ENCODE measurements at regions of chr6 and their contacts with region 1.

Region 1: GRCh38 chr6:52263709-52264540 is 19.6 kb upstream of the IL17F start:
- DNase-seq: peak; percentile 70

Region 2: DNA sequence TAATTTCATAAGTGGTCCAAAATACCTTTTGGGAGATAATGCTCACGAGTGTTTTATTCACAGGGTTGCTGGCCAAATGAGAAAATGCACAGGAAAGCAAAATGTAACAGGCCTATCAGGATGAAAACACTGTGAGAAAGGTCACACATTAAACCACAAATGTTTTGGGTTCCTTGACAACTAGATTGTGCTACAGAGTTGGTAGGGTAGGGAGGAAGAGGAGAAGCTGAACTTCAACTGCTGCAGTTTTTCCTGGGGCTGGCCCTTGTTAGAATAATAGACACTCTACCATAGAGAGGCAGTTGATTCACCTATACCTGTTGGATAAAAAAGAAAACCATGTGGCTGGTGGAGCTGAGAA is 69.9 kb after region 1 on chr6:
- CTCF ChIA-PET with region 1: no interaction called
- POLR2A ChIA-PET with region 1: no interaction called
- DNase-seq: no peak

Region 3: GRCh38 chr6:52399511-52400312 is 135.8 kb after region 1 on chr6:
- CTCF ChIA-PET with region 1: interaction called, 12 read pairs
- POLR2A ChIA-PET with region 1: no interaction called
- DNase-seq: peak; percentile 65

Measured in HEK293T (cell line).